ENCODE measurements at regions of chr7 and their contacts with region 1.

Region 1: DNA sequence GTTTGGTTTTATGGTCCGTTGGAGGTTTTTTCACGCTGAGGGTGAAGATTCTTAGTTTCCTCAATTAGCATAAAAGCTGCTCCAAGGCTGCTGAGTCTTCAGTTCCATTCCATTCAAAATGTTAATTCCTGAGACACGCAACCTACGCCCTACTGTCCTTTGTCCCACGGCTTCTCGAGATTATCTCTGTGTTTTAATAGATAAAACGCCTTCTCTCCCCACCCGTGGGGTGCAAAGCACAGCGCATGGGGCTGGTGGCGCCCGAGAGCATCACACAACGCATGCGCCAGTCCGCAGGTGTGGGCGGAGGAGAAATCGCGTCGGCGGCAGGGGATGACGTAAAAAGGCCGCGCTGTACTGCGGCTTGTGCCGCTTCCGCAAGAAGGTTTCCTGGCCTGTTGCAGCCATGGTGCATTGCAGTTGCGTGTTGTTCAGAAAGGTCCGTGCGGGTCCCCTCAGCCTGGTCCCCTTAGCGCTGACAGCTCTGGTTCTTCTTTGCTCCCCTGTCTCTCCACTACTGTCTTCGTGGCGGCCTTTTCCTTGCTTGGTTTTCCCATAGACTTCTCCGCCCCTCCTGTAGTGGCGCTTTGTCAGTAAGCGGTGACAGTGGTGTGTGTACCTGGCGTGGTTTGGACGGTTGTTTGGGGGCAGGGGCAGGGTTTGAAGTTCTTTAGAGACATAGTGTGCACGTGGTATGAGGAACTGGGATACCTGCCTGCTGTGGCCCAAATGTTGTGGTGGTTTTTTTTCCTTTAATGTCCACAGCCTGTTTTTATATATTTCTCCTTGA is at the start of gene GTPBP10:
- DNase-seq: peak; percentile 97
- H3K4me3 ChIP-seq: peak within 1 kb of the TSS; percentile 88 to 95 (median 91)
- H3K27ac ChIP-seq: peak within 1 kb of the TSS; percentile 57
- H3K4me1 ChIP-seq: peaks cover 12% of the 10 kb centered on the region
- H3K27me3 ChIP-seq: no peaks in the 10 kb centered on the region
- CTCF ChIP-seq: peak; percentile 69 to 71
- POLR2A ChIP-seq: peak; percentile 95
- total RNA-seq, gene GTPBP10: 14.6 and 16.7 TPM in 2 replicates

Region 2: GRCh38 chr7:90312745-90313144 is 33.8 kb before region 1 on chr7:
- CTCF ChIA-PET with region 1: interaction called, 13 read pairs
- POLR2A ChIA-PET with region 1: no interaction called
- dilution Hi-C with region 1: no loop called
- intact Hi-C with region 1: no loop called
- DNase-seq: peak; percentile 25
- H3K4me3 ChIP-seq: no peak overlapping the region
- H3K27ac ChIP-seq: no peak overlapping the region
- H3K4me1 ChIP-seq: no peaks in the 10 kb centered on the region
- H3K27me3 ChIP-seq: peaks cover 11 to 17% of the 10 kb centered on the region in 2 experiments
- CTCF ChIP-seq: peak; percentile 4 to 23
- POLR2A ChIP-seq: no peak

Region 3: DNA sequence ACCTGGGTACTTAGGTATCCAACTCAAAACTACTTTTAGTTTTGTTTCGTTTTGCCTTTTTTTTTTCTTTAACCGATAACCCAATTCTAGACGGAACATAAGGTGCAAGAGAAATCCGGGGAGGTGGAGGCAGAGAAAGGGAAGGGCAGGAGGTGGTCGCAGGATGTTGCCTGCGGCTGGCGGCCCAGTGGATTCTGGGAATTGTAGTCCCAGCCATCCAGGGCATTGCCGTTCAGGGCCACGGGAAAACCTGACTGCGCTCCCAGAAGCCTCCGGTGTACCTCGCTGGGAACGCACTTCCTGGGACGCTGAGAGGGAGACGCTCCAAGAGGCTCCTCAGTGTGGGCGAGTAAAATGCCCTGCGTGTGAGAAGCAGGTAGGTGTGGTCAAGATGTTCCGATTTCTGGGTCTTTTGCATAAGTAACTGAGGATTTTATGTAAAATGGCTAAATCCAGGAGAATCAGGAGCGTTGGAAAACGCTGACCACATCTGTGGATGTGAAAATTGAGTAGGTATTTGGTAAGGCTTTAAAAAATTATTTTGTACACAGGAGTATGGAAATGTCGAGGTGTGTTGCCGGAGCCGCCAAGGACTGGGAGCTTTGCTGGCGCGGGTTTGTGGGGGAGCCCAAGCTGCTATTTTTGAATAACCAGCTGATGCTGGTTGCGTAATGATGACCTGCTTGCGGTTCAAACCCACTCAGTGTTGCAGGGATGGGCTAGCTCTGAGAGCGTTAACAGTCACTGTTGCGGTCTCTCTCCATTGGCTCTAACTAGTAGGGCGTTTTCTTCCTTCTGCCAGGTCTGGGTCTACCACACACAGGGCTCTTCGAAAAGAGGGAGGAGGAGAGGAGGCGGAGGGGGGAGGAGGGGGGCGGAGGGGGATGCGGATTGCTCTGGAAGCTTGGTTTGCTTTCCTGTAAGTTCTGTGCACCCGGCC is 56.9 kb after region 1 on chr7 and contains the start of gene CLDN12:
- CTCF ChIA-PET with region 1: interaction called, 7 read pairs
- POLR2A ChIA-PET with region 1: no interaction called
- dilution Hi-C with region 1: no loop called
- intact Hi-C with region 1: loop called (anchors 1 kb)
- DNase-seq: peak; percentile 76
- H3K4me3 ChIP-seq: peak within 1 kb of the TSS; percentile 57 to 90 (median 80)
- H3K27ac ChIP-seq: peak within 1 kb of the TSS; percentile 56
- H3K4me1 ChIP-seq: peaks cover 6% of the 10 kb centered on the region
- H3K27me3 ChIP-seq: peaks cover 6 to 14% of the 10 kb centered on the region in 2 experiments
- CTCF ChIP-seq: no peak
- POLR2A ChIP-seq: peak; percentile 76
- total RNA-seq, gene CLDN12: 6.1 and 8.1 TPM in 2 replicates